ENCODE measurements at regions of chr18 and their contacts with region 1.

Region 1: GRCh38 chr18:49412679-49413078 is 47.8 kb downstream of the DYM start:
- DNase-seq: no peak

Region 2: GRCh38 chr18:48851599-48851960 is 561.1 kb before region 1 on chr18:
- intact Hi-C with region 1: no loop called
- DNase-seq: peak; percentile 52 to 88 (median 75)

Region 3: GRCh38 chr18:49250816-49251388 is 161.8 kb before region 1 on chr18:
- intact Hi-C with region 1: loop called (anchors 10 kb)
- DNase-seq: peak in 13 of 42 donors; percentile 13 to 63 (median 26)

Measured in head of caudate nucleus (tissue), 42 donors.